ENCODE measurements at regions of chr9 and their contacts with region 1.

Region 1: DNA sequence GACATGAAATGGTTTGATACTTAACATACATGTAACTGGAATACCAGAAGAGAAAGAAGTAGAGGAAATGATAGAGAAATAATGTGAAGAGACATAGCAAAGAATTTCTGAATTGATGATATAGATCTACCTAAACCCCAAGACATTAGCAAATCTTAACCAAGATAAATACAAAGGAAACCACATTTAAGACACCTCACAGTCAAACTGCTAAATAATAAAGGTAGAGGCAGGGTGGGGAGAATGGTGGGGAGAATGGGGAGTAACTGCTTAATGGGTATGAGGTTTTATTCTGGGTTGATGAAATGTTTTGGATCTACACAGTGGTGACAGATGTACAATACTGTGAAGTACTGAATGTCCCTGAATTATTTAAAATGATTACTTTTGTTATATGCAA is 17.5 kb downstream of the CARNMT1 start:
- DNase-seq: no peak
- ATAC-seq: no peak
- H3K4me3 ChIP-seq: no peak overlapping the region
- H3K27ac ChIP-seq: no peak overlapping the region
- H3K4me1 ChIP-seq: no peaks in the 10 kb centered on the region
- H3K27me3 ChIP-seq: no peaks in the 10 kb centered on the region

Region 2: GRCh38 chr9:74942801-74943200 is 67.8 kb before region 1 on chr9:
- intact Hi-C with region 1: no loop called
- DNase-seq: no peak
- ATAC-seq: no peak
- H3K4me3 ChIP-seq: no peak overlapping the region
- H3K27ac ChIP-seq: no peak overlapping the region
- H3K4me1 ChIP-seq: peaks cover 1% of the 10 kb centered on the region
- H3K27me3 ChIP-seq: no peaks in the 10 kb centered on the region

Region 3: DNA sequence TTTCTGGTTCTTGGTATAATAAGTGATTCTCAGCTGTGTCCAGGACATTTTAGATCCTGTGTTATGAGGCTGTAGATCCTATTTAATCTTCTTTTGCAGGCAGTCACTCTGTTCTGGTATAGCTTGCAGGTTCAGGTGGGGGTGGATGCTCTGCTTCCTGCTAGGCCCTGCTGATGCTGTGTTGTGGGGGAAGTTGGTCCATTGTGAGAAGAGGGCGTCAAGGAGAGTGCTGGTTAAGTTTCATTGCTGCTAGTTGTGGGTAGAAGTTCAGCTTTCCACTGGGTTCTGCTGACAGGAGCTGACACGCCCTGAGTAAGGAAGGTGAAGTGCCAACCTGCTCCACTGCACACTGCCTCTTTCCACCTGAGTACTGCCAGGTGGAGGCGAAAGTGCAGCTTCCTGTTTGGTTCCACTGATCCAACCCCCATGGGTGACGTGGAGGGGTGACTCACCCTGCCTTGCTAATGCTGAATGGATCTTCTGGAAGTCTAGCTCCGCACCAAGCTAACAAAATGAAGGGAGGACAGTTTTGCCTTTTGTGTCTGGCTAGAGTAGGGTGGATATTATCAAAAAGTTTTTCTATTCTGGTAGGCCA is 61.1 kb after region 1 on chr9:
- intact Hi-C with region 1: loop called in 1 of 4 experiments (anchors 10 kb)
- DNase-seq: no peak
- ATAC-seq: peak in 1 of 2 donors; percentile 48
- H3K4me3 ChIP-seq: no peak overlapping the region
- H3K27ac ChIP-seq: no peak overlapping the region
- H3K4me1 ChIP-seq: no peaks in the 10 kb centered on the region
- H3K27me3 ChIP-seq: no peaks in the 10 kb centered on the region

Region 4: GRCh38 chr9:75085640-75086039 is 75.1 kb after region 1 on chr9:
- intact Hi-C with region 1: no loop called
- DNase-seq: no peak
- ATAC-seq: no peak
- H3K4me3 ChIP-seq: no peak overlapping the region
- H3K27ac ChIP-seq: no peak overlapping the region
- H3K4me1 ChIP-seq: peaks cover 5% of the 10 kb centered on the region
- H3K27me3 ChIP-seq: no peaks in the 10 kb centered on the region

Measured in right cardiac atrium (tissue), 5 donors.